ENCODE measurements at regions of chr17 and their contacts with region 1.

Region 1: GRCh38 chr17:27601069-27601975 is 29.7 kb upstream of the LGALS9 start:
- DNase-seq: peak; percentile 82 to 92 (median 85)
- H3K4me3 ChIP-seq: no peak overlapping the region
- H3K27ac ChIP-seq: no peak overlapping the region
- H3K4me1 ChIP-seq: peaks cover 0 to 23% (median 21%) of the 10 kb centered on the region in 4 experiments
- H3K27me3 ChIP-seq: no peaks in the 10 kb centered on the region

Region 2: GRCh38 chr17:27236717-27237315 is 364.5 kb before region 1 on chr17:
- CTCF ChIA-PET with region 1: interaction called, 162 read pairs
- POLR2A ChIA-PET with region 1: no interaction called
- DNase-seq: peak; percentile 78 to 89 (median 81)
- H3K4me3 ChIP-seq: no peak overlapping the region
- H3K27ac ChIP-seq: no peak overlapping the region
- H3K4me1 ChIP-seq: peaks cover 0 to 7% (median under 1%) of the 10 kb centered on the region in 4 experiments
- H3K27me3 ChIP-seq: no peaks in the 10 kb centered on the region

Region 3: DNA sequence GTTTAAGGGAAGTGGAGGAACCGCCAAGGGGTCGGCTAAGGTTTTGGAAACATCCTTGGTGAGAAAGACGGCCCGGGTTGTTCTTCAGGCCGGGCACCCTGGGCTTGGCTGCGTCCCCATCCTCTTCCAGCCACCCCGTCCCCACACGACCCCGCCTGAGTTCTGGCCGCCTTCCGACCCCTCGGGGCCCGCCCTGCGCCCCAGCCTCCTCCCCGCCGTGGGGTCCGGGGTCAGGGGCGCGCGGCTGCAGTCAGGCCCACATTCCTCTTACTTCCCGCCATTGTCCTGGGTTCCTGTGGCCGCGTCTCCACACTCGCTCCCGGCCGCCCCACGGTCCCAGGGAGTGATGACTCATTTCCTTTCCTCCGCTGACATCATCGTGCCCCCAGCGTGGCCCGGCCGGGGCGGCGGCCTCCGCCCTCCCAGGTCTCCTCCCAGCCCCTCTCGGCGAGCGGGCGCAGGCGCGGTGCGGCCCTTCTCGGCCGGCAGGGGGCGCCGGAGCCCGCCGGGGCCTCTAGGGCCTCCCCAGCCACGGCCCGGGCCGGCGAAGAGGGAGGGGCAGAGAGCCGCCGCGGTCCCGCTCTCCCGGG is 247.8 kb before region 1 on chr17:
- CTCF ChIA-PET with region 1: interaction called, 24 read pairs
- POLR2A ChIA-PET with region 1: no interaction called
- DNase-seq: peak; percentile 91 to 94 (median 93)
- H3K4me3 ChIP-seq: peak overlapping the region; percentile 51 to 83 (median 76)
- H3K27ac ChIP-seq: peak overlapping the region; percentile 85 to 96
- H3K4me1 ChIP-seq: peaks cover 0 to 32% (median 21%) of the 10 kb centered on the region in 4 experiments
- H3K27me3 ChIP-seq: no peaks in the 10 kb centered on the region

Region 4: GRCh38 chr17:27430882-27431491 is 170.3 kb before region 1 on chr17:
- CTCF ChIA-PET with region 1: interaction called, 11 read pairs
- POLR2A ChIA-PET with region 1: no interaction called
- DNase-seq: peak in 2 of 3 donors; percentile 20 to 37
- H3K4me3 ChIP-seq: no peak overlapping the region
- H3K27ac ChIP-seq: no peak overlapping the region
- H3K4me1 ChIP-seq: no peaks in the 10 kb centered on the region
- H3K27me3 ChIP-seq: no peaks in the 10 kb centered on the region

Region 5: GRCh38 chr17:27532269-27533263 is 68.8 kb before region 1 on chr17:
- CTCF ChIA-PET with region 1: interaction called, 18 read pairs
- POLR2A ChIA-PET with region 1: interaction called, 3 read pairs
- DNase-seq: peak; percentile 67 to 89 (median 89)
- H3K4me3 ChIP-seq: peak overlapping the region in 1 of 7 experiments; percentile 31
- H3K27ac ChIP-seq: peak overlapping the region in 1 of 2 experiments; percentile 76
- H3K4me1 ChIP-seq: peaks cover 35 to 87% (median 54%) of the 10 kb centered on the region in 4 experiments
- H3K27me3 ChIP-seq: no peaks in the 10 kb centered on the region

Region 6: GRCh38 chr17:27586203-27586721 is 15.1 kb before region 1 on chr17:
- CTCF ChIA-PET with region 1: interaction called, 90 read pairs
- POLR2A ChIA-PET with region 1: no interaction called
- DNase-seq: no peak
- H3K4me3 ChIP-seq: no peak overlapping the region
- H3K27ac ChIP-seq: no peak overlapping the region
- H3K4me1 ChIP-seq: peaks cover 0 to 13% (median 10%) of the 10 kb centered on the region in 4 experiments
- H3K27me3 ChIP-seq: no peaks in the 10 kb centered on the region

Region 7: DNA sequence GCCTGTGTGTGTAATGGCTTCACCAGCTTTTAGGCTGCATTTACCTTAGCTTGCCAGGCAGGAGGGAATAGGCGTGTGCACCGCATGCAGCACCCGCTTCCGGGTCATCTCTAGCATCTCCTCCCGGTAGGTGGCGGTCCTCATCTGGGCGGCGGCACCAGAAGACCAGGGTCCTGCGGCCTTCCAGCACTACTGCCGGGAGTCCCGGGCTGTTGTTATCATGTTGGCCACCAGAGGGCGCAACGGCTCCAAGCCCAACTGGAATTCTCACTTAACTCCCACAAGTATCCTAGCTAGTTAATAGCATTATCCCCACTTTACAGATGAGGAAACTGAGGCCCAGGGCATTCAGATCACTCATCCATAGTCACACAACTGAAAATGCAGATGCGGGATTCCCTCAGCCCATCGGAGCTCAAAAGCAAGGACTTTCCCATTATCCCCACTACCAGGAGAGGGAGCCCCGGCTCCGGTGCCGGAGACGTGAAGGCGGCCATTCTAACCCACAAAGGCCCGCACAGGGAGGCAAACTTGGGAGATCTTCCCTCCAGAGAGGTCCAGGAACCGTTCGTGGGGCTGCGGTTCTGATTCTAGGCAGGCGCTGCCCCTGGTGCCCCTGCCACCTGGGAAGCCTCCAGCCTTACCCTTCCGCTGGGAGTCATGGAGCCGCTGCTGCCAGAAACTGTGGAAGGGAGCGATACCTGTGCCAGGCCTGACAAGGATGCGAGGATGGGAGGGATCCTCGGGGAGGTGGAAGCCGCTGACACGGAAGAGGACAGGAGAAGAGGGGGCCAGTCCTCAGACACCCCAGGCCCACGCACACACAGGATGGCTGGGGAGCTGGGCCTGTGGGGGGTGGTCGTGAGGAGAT is 53.6 kb after region 1 on chr17:
- CTCF ChIA-PET with region 1: interaction called, 102 read pairs
- POLR2A ChIA-PET with region 1: no interaction called
- DNase-seq: peak; percentile 79 to 87 (median 85)
- H3K4me3 ChIP-seq: no peak overlapping the region
- H3K27ac ChIP-seq: no peak overlapping the region
- H3K4me1 ChIP-seq: peaks cover 0 to 3% (median under 1%) of the 10 kb centered on the region in 4 experiments
- H3K27me3 ChIP-seq: peaks cover 0 to 1% (median 0%) of the 10 kb centered on the region in 5 experiments

Region 8: DNA sequence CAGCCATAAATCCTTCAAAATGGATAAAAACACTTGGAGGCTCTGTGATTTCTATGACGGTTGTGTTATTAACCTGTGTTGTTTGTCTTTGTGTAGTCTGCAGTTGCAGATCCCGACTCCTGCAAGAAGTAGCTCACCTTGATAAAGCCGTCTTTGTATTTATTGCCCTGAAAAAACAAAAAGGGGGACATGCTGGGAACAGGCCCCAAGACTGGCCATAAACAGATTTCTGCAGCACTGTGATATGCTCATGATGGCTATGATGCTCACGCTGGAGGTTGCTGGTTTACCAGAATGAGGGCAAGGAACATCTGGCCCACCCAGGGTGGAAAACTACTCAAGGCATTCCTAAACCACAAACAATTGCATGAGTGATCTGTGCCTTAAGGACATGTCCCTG is 100.6 kb after region 1 on chr17:
- CTCF ChIA-PET with region 1: no interaction called
- POLR2A ChIA-PET with region 1: no interaction called
- DNase-seq: no peak
- H3K4me3 ChIP-seq: no peak overlapping the region
- H3K27ac ChIP-seq: no peak overlapping the region
- H3K4me1 ChIP-seq: no peaks in the 10 kb centered on the region
- H3K27me3 ChIP-seq: peaks cover 0 to 2% (median 0%) of the 10 kb centered on the region in 5 experiments